HAP-1 (cell line): ENCODE measurements at regions of chr4 and their contacts with region 1.

Region 1: DNA sequence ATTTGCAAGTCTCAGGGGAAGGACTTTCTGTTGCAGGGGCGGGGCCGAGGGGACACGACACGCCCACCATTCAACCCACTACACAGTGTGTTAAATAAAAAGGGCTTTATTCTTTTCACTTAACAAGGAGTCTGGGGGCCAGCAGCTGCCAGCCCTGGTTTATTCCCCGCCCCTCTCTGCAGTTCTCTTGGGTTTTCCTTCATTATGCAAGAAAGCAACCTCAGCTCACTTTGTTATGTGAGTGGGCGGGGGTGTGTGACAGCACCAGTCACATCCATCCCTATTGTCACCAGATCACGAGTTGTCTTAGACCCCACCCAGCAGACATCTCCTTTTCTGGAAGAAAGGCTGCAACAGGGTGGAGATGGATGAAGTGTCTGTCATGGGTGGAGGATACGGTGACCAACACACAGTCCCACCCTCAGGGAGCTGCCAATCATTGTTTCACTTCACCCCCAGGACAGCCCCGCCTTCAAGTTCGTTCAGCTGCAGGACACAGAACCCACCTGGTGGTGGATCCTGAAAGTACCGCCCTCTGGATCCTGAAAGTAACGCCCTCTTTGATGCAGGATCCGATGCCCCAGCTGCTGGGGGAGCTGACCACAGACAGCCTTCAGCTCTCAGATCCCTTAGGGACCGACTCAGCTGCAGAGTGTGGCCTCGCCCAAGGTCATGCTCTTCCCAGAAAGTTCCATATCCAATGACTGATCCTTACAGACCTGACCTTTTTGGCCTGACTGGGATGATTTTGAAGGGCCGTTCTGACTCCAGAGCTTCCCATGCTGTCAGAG is 79.6 kb downstream of the SMIM20 start:
- DNase-seq: peak; percentile 70 to 88
- H3K4me3 ChIP-seq: no peak overlapping the region
- H3K4me1 ChIP-seq: 0 out of 2 replicates have a peak, but pooled peaks cover 4% of the 10 kb centered on the region
- H3K27me3 ChIP-seq: no peaks in the 10 kb centered on the region

Region 2: DNA sequence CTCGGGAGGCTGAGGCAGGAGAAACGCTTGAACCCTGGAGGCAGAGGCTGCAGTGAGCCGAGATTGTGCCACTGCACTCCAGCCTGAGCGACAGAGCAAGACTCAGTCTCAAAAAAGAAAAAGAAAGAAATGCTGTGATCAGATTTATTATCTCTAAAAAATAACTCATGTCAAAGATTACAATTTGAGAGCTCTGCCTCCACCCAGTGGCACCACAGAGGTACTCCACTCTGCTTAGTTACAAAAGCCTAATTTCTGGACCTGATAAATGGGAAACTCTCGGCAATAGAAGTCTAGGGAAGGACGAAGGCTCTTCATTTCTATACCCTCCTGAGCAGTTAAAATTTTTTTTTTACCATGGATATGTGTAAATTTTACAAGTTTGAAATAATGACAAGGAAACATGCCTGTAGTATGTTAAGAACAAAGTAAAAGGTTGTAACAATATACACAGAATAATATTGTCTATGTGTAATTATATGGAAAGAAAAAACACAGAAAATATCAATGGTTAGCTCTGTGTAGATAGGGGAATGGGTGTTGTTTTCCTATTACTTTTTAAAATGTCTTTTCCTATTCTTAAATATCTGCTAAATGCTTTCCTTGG is 1016.8 kb after region 1 on chr4:
- in situ Hi-C with region 1: loop called (anchors 25 kb)
- DNase-seq: peak; percentile 68 to 73
- H3K4me3 ChIP-seq: no peak overlapping the region
- H3K4me1 ChIP-seq: peaks cover 8% of the 10 kb centered on the region
- H3K27me3 ChIP-seq: no peaks in the 10 kb centered on the region